K562 (cell line): ENCODE measurements at regions of chr7 and their contacts with region 1.

Region 1: DNA sequence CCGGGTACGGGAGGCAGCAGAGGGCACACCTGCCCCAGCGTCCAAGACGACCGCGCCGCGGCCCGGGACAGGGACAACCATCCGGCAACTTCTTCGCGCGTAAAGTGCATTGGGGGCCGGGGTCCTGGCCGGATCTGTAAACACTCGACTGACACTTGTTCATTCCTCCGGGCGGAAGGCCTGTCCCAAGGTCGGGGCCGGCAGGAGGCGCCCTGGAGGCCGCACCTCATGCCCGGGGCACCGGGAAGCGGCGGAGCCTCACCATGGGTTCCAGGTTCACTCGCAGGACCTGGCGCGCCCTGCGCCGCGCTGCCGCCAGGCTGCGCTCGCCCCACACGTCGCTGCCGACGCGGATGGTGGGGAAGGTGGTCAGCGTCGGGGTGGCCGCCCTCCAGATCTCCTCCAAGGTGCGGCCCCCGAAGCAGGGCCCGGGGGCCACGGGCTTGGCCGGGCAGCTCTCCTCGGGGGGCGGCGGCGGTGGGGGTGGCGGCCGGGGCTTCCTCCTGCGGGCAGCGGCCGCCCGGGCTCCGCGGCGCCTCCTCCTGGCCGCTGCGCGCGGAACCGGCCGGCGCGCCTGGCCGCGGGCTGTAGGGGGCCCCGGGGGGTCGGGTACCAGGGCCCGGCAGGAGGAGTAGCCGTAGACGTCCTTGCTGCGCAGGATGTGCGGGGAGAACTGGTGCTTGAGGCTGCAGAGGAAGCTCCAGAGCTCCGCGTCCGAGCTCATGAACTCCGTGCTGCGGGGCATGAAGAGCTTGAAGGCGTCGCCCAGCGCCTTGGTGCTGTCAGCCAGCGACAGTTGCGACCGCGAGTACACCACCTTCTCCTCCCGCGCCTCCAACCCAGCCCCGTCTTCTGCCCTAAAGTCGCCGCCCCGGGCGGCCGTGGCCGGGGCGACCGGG is 746 bp downstream of the CCDC71L start:
- DNase-seq: peak; percentile 89 to 94 (median 90)
- ATAC-seq: peak; percentile 78
- H3K4me3 ChIP-seq: peak overlapping the region; percentile 73
- H3K27ac ChIP-seq: peak overlapping the region; percentile 92
- H3K4me1 ChIP-seq: peaks cover 11 to 38% of the 10 kb centered on the region in 2 experiments; a peak in 4 of 5 replicates
- H3K27me3 ChIP-seq: no peaks in the 10 kb centered on the region
- CTCF ChIP-seq: peak; percentile 97 to 99 (median 98)
- EP300 ChIP-seq: peak; percentile 68
- POLR2A ChIP-seq: peak; percentile 55
- RAD21 ChIP-seq: peak; percentile 91 to 98

Region 2: GRCh38 chr7:106484562-106484961 is 175.7 kb before region 1 on chr7:
- CTCF ChIA-PET with region 1: no interaction called
- POLR2A ChIA-PET with region 1: no interaction called
- in situ Hi-C with region 1: no loop called
- intact Hi-C with region 1: loop called (anchors 5 kb)
- DNase-seq: no peak
- ATAC-seq: no peak
- H3K4me3 ChIP-seq: no peak overlapping the region
- H3K27ac ChIP-seq: no peak overlapping the region
- H3K4me1 ChIP-seq: peaks cover 8 to 28% of the 10 kb centered on the region in 2 experiments; a peak in 3 of 5 replicates
- H3K27me3 ChIP-seq: no peaks in the 10 kb centered on the region
- CTCF ChIP-seq: no peak
- EP300 ChIP-seq: no peak
- POLR2A ChIP-seq: no peak
- RAD21 ChIP-seq: no peak

Region 3: GRCh38 chr7:106588422-106589198 is 71.6 kb before region 1 on chr7:
- CTCF ChIA-PET with region 1: no interaction called
- POLR2A ChIA-PET with region 1: interaction called, 4 read pairs
- in situ Hi-C with region 1: no loop called
- intact Hi-C with region 1: loop called (anchors 5 kb)
- DNase-seq: peak in 3 of 4 experiments; percentile 45 to 67 (median 54)
- ATAC-seq: peak; percentile 63
- H3K4me3 ChIP-seq: no peak overlapping the region
- H3K27ac ChIP-seq: peak overlapping the region; percentile 15; the same call in 1 of the 3 replicates
- H3K4me1 ChIP-seq: peaks cover 11 to 62% of the 10 kb centered on the region in 2 experiments
- H3K27me3 ChIP-seq: no peaks in the 10 kb centered on the region
- CTCF ChIP-seq: no peak
- EP300 ChIP-seq: peak; percentile 16; the same call in 1 of the 2 replicates
- POLR2A ChIP-seq: no peak
- RAD21 ChIP-seq: no peak

Region 4: GRCh38 chr7:106679153-106679931 is 19.1 kb after region 1 on chr7:
- CTCF ChIA-PET with region 1: interaction called, 3 read pairs
- POLR2A ChIA-PET with region 1: interaction called, 12 read pairs
- in situ Hi-C with region 1: no loop called
- intact Hi-C with region 1: no loop called
- DNase-seq: peak; percentile 70 to 82 (median 78)
- ATAC-seq: peak; percentile 91
- H3K4me3 ChIP-seq: no peak overlapping the region
- H3K27ac ChIP-seq: peak overlapping the region; percentile 66
- H3K4me1 ChIP-seq: peaks cover 7 to 21% of the 10 kb centered on the region in 2 experiments; a peak in 4 of 5 replicates
- H3K27me3 ChIP-seq: no peaks in the 10 kb centered on the region
- CTCF ChIP-seq: no peak
- EP300 ChIP-seq: peak; percentile 77
- POLR2A ChIP-seq: no peak
- RAD21 ChIP-seq: peak in 1 of 2 experiments; percentile 44; a peak in 2 of 4 replicates

Region 5: DNA sequence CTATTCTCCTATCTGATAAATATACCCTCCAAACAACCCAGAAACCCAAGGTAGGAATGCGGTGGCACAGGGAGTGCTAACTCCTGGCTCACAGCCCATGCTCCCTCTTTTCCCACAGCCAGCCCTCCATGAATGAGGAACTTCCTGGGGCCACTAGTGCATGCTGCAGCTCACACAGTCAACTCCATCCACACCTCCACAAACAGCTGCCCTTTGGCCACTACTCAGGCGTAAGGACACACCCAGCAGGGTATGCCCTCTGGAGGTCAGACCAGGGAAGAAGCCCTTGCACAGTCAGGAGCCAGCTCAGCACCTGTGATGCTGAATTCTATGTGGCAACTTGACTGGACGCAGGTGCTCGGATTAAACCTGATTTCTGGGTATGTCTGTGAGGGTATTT is 119.7 kb after region 1 on chr7:
- CTCF ChIA-PET with region 1: interaction called, 3 read pairs
- POLR2A ChIA-PET with region 1: interaction called, 14 read pairs
- in situ Hi-C with region 1: no loop called
- intact Hi-C with region 1: loop called (anchors 1 kb)
- DNase-seq: peak; percentile 33 to 71 (median 56)
- ATAC-seq: peak; percentile 74
- H3K4me3 ChIP-seq: no peak overlapping the region
- H3K27ac ChIP-seq: no peak overlapping the region
- H3K4me1 ChIP-seq: peaks cover 12 to 56% of the 10 kb centered on the region in 2 experiments; a peak in 4 of 5 replicates
- H3K27me3 ChIP-seq: no peaks in the 10 kb centered on the region
- CTCF ChIP-seq: peak; percentile 66 to 84 (median 69)
- EP300 ChIP-seq: 0 out of 2 replicates have a peak, but pooled peaks have one; percentile 10
- POLR2A ChIP-seq: 0 out of 2 replicates have a peak, but pooled peaks have one; percentile 39
- RAD21 ChIP-seq: peak; percentile 38 to 68; a peak in 3 of 4 replicates

Region 6: DNA sequence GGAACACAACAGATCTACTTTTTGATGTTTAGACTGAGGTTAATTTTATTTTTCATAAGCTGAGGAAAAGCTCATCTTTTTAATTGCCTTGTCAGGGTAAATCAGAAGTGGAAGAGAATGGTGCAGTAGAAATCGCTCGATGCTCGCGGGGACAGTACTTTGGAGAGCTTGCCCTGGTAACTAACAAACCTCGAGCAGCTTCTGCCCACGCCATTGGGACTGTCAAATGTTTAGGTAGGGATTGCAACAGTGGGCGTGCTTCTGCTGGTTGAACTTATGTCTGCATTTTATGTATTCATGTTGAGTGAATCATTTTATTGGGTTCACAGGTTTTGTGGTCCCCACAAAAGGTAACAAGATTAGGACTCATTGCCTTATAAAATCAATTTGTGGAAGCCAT is 496.9 kb after region 1 on chr7:
- CTCF ChIA-PET with region 1: no interaction called
- POLR2A ChIA-PET with region 1: no interaction called
- in situ Hi-C with region 1: no loop called
- intact Hi-C with region 1: no loop called
- DNase-seq: no peak
- ATAC-seq: no peak
- H3K4me3 ChIP-seq: no peak overlapping the region
- H3K27ac ChIP-seq: no peak overlapping the region
- H3K4me1 ChIP-seq: no peaks in the 10 kb centered on the region
- H3K27me3 ChIP-seq: no peaks in the 10 kb centered on the region
- CTCF ChIP-seq: no peak
- EP300 ChIP-seq: no peak
- POLR2A ChIP-seq: no peak
- RAD21 ChIP-seq: no peak

Region 7: GRCh38 chr7:107168233-107169119 is 508.3 kb after region 1 on chr7 and contains the start of gene HBP1:
- CTCF ChIA-PET with region 1: no interaction called
- POLR2A ChIA-PET with region 1: no interaction called
- in situ Hi-C with region 1: no loop called
- intact Hi-C with region 1: loop called (anchors 5 kb)
- DNase-seq: peak; percentile 96 to 100 (median 98)
- ATAC-seq: peak; percentile 89
- H3K4me3 ChIP-seq: peak within 1 kb of the TSS; percentile 74
- H3K27ac ChIP-seq: peak within 1 kb of the TSS; percentile 93
- H3K4me1 ChIP-seq: peaks cover 5 to 21% of the 10 kb centered on the region in 2 experiments
- H3K27me3 ChIP-seq: no peaks in the 10 kb centered on the region
- CTCF ChIP-seq: 0 out of 6 replicates have a peak, but pooled peaks of 1 of the 3 experiments have one; percentile 10
- EP300 ChIP-seq: no peak; the same call in 1 of the 2 replicates
- POLR2A ChIP-seq: peak; percentile 72
- RAD21 ChIP-seq: no peak
- polyA plus RNA-seq, gene HBP1: 37.9 to 44.9 TPM